Activated CD4-positive, alpha-beta memory T cell treated with anti-CD3 and anti-CD28 coated beads for 36 hours (primary cell): ENCODE measurements at regions of chr16 and their contacts with region 1.

Region 1: DNA sequence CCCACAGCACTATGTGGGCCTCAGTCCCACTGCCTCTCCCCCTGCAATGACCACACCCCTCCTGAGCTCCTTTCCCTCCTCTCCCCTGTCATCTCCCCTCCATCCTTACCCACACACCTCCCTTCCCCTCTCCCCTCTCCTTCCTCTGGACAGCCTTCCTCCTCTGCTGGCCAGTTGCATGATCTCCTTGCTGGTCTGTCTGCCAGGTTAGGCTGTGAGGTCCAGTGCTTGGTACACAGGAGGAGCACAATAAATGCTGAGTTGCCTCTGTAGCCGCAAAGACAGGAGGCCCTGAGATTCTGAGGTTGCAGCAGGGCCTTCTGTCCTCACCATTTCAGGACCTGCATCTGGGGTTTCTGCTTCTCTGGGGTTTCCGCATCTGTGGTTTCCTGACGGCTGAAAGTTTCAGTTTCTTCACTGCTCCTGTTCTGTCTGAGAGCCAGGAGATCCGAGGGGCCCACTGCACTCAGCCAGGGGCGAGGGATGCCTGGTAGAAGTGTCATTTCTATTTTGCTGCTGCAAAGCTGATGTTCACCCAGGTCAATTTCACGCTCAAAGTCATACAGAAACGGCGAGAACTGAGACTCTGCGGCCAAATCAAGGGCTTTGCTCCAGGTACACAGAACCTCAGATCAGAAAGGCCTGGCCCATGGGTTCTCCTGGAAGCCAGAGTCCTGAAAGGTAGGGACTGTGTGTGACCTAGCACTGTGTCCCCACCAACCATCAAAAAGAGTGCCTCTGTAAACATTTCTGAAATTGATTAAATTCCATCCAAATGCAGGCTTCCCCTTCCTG is 4.6 kb upstream of the SLC12A3 start:
- DNase-seq: peak; percentile 81
- H3K4me3 Mint-ChIP-seq: peak overlapping the region; percentile 33
- H3K27ac Mint-ChIP-seq: peak overlapping the region; percentile 67
- H3K4me1 Mint-ChIP-seq: peaks cover 40% of the 10 kb centered on the region
- H3K27me3 Mint-ChIP-seq: no peaks in the 10 kb centered on the region

Region 2: DNA sequence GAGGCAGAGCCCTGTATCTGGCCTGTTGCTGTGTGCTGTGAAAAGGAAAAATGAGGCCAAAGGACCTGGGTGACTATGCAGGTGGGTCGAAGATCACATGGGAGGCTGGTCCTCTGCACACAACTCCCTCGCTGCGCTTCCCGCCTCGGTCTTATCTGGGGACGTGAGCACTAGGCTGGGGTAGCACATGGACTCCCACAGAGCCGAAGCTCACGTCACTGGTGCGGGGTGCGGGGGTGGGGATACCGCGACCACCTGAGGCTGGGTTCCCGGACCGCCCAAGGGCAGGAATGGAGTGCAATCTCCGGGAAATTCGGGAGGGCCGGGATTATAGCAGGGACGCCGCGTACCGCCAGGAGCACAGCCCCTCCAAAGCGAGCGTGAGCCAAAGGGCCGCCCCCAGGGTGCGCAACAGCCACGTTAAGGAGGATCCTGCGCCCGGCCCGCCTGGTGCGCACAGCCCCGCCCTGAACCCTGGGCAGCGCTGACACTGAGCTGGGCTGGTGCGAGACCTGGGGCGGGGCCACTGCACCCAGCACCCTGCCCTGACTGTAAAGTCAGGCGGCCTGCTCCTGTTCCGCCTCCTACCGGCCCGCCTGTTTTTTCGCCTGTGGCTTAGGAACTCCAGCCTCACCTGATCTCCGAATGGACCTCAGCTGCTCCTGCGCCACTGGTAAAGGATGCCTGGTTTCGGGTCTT is 217.2 kb before region 1 on chr16:
- CTCF ChIA-PET with region 1: no interaction called
- POLR2A ChIA-PET with region 1: no interaction called
- intact Hi-C with region 1: no loop called
- DNase-seq: peak; percentile 89
- H3K4me3 Mint-ChIP-seq: peak overlapping the region; percentile 54
- H3K27ac Mint-ChIP-seq: no peak overlapping the region
- H3K4me1 Mint-ChIP-seq: peaks cover 18% of the 10 kb centered on the region
- H3K27me3 Mint-ChIP-seq: peaks cover 36% of the 10 kb centered on the region

Region 3: GRCh38 chr16:56841233-56841632 is 19.2 kb before region 1 on chr16:
- CTCF ChIA-PET with region 1: no interaction called
- POLR2A ChIA-PET with region 1: no interaction called
- intact Hi-C with region 1: no loop called
- DNase-seq: no peak
- H3K4me3 Mint-ChIP-seq: no peak overlapping the region
- H3K27ac Mint-ChIP-seq: no peak overlapping the region
- H3K4me1 Mint-ChIP-seq: peaks cover 5% of the 10 kb centered on the region
- H3K27me3 Mint-ChIP-seq: no peaks in the 10 kb centered on the region

Region 4: DNA sequence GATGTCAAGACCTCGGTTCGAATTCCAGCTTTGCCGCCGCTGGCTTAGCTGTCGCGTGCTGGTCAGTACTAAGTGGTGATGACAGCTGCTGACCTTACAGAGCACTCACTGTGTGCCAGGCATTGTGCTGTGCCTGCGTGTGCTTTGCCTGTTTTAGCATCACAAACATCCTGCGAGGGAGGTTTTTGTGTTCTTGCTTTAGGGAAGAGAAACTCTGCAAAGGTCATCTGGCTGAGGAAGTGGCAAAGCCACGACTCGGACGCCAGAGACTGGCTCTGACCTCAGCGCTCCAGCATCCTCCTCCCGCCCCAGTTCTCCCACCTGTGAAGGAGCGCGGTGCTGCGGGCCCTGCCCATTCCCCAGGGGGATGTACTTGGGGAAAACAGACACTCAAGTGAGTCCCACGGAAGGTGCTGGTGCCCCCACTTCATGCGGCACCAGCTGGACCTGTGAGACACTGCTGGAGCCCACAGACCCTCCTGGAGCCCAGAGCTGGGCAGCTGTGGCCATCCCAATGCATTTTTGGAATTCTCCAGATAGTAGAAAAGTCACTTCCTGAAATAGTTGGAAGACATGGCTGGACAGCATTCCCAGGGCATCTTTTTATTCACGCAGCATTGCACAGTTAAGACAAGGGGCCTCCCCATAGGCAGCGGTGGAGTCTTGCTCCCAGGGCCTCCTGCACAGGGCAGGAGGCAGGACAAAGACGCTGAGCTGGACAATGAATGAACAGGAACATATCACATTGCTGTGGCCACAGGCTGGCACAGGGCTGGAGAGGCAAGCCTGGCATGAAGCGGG is 51.5 kb after region 1 on chr16:
- CTCF ChIA-PET with region 1: no interaction called
- POLR2A ChIA-PET with region 1: no interaction called
- intact Hi-C with region 1: loop called (anchors 5 kb)
- DNase-seq: no peak
- H3K4me3 Mint-ChIP-seq: no peak overlapping the region
- H3K27ac Mint-ChIP-seq: no peak overlapping the region
- H3K4me1 Mint-ChIP-seq: peaks cover 33% of the 10 kb centered on the region
- H3K27me3 Mint-ChIP-seq: no peaks in the 10 kb centered on the region